ENCODE measurements at regions of chr14 and their contacts with region 1.

Region 1: DNA sequence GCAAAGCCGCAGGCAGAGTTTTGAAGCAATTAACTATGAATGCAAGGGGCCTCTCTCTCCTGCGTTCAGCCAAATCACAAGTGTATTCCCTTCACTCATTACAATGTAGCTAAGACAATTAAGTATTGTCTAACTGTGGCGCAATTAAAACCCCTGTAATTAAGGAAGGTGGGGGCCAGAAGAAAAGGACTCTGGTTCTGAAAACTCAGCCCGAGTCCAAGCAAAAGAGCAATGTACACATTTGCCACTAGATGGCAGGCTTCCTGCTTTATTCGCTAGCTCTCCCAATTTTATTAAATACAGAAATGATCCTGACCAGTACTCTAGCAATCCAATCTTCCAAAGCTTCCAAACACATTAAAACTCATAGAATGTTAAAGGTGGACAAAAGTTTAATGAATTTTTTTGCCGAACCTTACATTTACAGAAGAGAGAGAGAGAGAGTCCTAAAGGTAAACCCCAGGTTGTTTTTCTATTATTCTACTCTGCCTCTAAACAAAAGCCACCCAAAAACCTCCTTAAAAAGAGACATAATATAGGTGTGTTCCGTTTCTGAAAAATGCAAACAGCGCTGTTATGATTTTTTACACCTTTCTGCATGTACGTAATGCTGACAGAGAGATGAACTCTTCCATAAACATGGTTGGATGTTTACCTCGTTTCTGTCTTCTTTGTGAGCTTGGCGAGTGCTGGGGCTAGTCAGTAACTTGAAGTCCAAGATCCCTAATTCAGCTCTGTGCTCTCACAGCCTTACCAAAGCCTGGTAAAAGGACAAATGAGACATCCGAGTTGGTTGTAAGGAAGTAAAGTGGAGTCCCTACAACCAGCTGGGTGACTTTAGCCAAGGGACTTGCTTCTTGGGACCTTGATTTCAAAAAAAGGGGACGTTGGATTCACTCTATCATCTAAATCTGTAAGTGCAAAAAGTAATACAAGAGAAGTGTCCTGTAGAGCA is 50.9 kb upstream of the VASH1 start:
- DNase-seq: peak in 5 of 9 donors; percentile 11 to 44 (median 33)
- ATAC-seq: peak; percentile 67
- H3K4me3 ChIP-seq: no peak overlapping the region
- H3K4me3 Mint-ChIP-seq: no peak overlapping the region
- H3K27ac ChIP-seq: no peak overlapping the region
- H3K27ac Mint-ChIP-seq: no peak overlapping the region
- H3K4me1 ChIP-seq: no peaks in the 10 kb centered on the region
- H3K4me1 Mint-ChIP-seq: no peaks in the 10 kb centered on the region
- H3K27me3 ChIP-seq: no peaks in the 10 kb centered on the region
- H3K27me3 Mint-ChIP-seq: peaks cover 3 to 11% (median 9%) of the 10 kb centered on the region in 5 donors

Region 2: DNA sequence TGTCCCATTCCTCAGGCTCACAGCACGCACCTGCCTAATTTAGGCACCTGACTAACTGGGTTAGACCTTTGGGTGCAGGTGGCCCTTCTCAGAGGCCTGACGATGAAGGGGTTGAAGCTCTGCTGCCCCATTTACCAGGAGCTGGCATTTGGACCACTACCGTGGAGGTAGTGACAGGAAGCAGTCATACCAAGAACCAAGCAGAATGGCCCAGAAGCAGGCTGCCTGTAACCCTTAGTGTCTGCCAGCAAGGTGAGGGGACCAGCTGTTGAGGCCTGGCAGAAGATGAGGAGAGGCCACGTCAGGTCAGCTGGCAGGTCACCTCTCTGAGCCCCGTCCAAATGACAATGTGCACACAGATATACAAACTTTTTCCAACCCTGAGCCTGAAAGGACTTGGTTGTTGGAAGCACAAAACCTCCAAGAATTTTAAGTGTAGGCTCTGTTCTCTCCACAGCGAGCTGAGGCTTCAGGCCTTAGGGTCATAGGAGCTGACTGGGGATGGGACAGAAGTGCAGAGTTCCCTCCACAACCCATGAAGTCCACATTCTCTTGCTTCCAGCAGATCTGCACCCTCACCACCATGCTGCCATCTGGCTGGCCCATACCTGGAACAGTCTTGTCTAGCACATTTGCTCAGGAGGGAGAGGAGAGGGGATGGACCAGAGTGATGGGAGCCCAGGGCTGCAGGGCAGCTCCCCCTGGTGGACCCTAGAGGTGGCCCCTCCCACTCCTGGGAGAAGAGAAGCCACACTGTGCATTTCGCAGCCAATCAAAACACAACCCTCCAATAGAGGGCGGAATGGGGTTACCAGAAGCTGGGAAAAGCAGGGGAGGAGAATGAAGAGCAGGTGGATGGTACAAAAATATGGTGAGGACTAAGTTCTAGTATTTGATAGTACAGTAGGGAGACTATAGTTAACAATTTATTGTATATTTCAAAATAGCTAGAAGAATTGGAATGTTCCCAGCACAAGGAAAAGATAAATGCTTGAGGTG is 74.2 kb after region 1 on chr14:
- CTCF ChIA-PET with region 1: interaction called, 12 read pairs
- POLR2A ChIA-PET with region 1: no interaction called
- intact Hi-C with region 1: loop called (anchors 1 kb)
- DNase-seq: peak; percentile 19 to 64 (median 40)
- ATAC-seq: peak; percentile 98
- H3K4me3 ChIP-seq: no peak overlapping the region
- H3K4me3 Mint-ChIP-seq: no peak overlapping the region
- H3K27ac ChIP-seq: no peak overlapping the region
- H3K27ac Mint-ChIP-seq: peak overlapping the region in 8 of 9 donors; percentile 5 to 83 (median 40)
- H3K4me1 ChIP-seq: peaks cover 0 to 6% of the 10 kb centered on the region in 2 donors
- H3K4me1 Mint-ChIP-seq: peaks cover 8 to 43% (median 15%) of the 10 kb centered on the region in 7 donors
- H3K27me3 ChIP-seq: no peaks in the 10 kb centered on the region
- H3K27me3 Mint-ChIP-seq: no peaks in the 10 kb centered on the region

Region 3: DNA sequence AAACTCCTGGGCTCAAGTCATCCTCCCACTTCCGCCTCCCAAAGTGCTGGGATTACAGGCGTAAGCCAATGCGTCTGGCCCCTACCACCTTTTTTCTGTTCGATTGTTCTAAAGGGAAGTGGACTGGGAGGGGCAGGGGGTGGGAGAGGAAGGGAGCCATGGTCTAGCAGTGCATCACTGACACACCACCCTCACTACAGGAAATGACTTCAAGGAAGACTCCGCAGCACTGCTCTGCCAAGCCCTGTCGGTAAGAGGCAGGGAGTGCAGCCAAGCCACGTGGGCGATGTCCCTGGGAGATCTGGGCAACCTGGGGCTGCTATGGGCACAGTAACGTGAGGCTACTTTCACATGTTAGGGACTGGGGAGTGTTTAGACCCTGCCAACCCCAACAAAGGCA is 133.9 kb after region 1 on chr14:
- CTCF ChIA-PET with region 1: no interaction called
- POLR2A ChIA-PET with region 1: no interaction called
- intact Hi-C with region 1: loop called in 1 of 2 experiments (anchors 1 kb)
- DNase-seq: peak in 8 of 9 donors; percentile 20 to 76 (median 68)
- ATAC-seq: peak; percentile 100
- H3K4me3 ChIP-seq: peak overlapping the region; percentile 31
- H3K4me3 Mint-ChIP-seq: peak overlapping the region; percentile 20 to 78 (median 62)
- H3K27ac ChIP-seq: no peak overlapping the region
- H3K27ac Mint-ChIP-seq: peak overlapping the region; percentile 65 to 92 (median 80)
- H3K4me1 ChIP-seq: peaks cover 8% of the 10 kb centered on the region in 2 donors
- H3K4me1 Mint-ChIP-seq: peaks cover 8 to 11% (median 10%) of the 10 kb centered on the region in 7 donors
- H3K27me3 ChIP-seq: no peaks in the 10 kb centered on the region
- H3K27me3 Mint-ChIP-seq: peaks cover 4 to 26% (median 11%) of the 10 kb centered on the region in 5 donors

Region 4: GRCh38 chr14:76863724-76864407 is 153.5 kb after region 1 on chr14:
- CTCF ChIA-PET with region 1: no interaction called
- POLR2A ChIA-PET with region 1: no interaction called
- intact Hi-C with region 1: loop called in 1 of 2 experiments (anchors 5 kb)
- DNase-seq: peak in 1 of 9 donors; percentile 23
- ATAC-seq: peak; percentile 58
- H3K4me3 ChIP-seq: no peak overlapping the region
- H3K4me3 Mint-ChIP-seq: peak overlapping the region in 8 of 10 donors; percentile 33 to 68 (median 60)
- H3K27ac ChIP-seq: no peak overlapping the region
- H3K27ac Mint-ChIP-seq: peak overlapping the region; percentile 2 to 88 (median 78)
- H3K4me1 ChIP-seq: peaks cover 0 to 37% of the 10 kb centered on the region in 2 donors
- H3K4me1 Mint-ChIP-seq: peaks cover 23 to 57% (median 55%) of the 10 kb centered on the region in 7 donors
- H3K27me3 ChIP-seq: no peaks in the 10 kb centered on the region
- H3K27me3 Mint-ChIP-seq: peaks cover 0 to 14% (median 0%) of the 10 kb centered on the region in 5 donors

Measured in naive thymus-derived CD4-positive, alpha-beta T cell (primary cell).